ENCODE measurements at regions of chr1 and their contacts with region 1.

Region 1: DNA sequence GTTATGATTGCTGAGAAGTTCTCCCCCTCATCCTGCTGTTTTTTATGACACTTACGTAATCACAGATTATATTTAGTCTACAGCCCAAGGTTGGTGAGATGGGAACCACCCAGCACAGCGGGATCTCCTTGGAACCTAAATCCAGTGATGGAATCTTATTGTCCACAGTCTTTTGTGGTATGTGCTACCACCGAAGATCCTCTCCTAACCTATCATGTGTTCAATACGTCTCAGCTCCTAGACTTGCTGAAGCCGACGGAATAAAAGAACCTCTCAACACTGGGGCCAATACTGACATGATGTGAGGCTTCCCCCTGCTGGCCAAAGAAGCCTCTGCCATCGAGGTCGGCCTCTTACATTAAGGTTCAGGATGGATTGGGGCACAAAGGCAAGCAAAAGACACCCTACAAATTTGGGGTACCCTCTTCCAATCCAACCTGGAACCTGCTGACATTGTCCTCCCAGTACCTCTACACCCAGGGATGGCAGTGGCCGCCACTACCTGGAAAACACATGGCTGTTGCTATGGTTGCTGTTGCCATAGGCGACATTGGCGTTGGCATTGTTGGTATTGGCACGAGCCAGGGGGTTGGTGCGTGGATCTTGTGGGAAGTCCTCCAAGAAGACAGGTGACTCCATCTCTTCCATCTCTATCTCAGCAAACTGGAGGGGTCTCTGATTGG is 19.4 kb upstream of the KIF21B start:
- DNase-seq: peak; percentile 66 to 76 (median 74)
- ATAC-seq: peak; percentile 86
- H3K4me3 ChIP-seq: no peak overlapping the region
- H3K27ac ChIP-seq: no peak overlapping the region
- H3K4me1 ChIP-seq: no peaks in the 10 kb centered on the region
- H3K27me3 ChIP-seq: no peaks in the 10 kb centered on the region
- CTCF ChIP-seq: peak; percentile 66 to 90 (median 79)
- POLR2A ChIP-seq: no peak

Region 2: GRCh38 chr1:200971955-200972711 is 70.8 kb before region 1 on chr1:
- intact Hi-C with region 1: loop called (anchors 5 kb)
- DNase-seq: peak; percentile 67 to 76 (median 71)
- ATAC-seq: peak; percentile 44
- H3K4me3 ChIP-seq: no peak overlapping the region
- H3K27ac ChIP-seq: no peak overlapping the region
- H3K4me1 ChIP-seq: peaks cover 4% of the 10 kb centered on the region
- H3K27me3 ChIP-seq: no peaks in the 10 kb centered on the region
- CTCF ChIP-seq: peak; percentile 61 to 93 (median 78)
- POLR2A ChIP-seq: no peak

Region 3: GRCh38 chr1:201266774-201267173 is 223.9 kb after region 1 on chr1:
- intact Hi-C with region 1: no loop called
- DNase-seq: no peak
- ATAC-seq: no peak
- H3K4me3 ChIP-seq: no peak overlapping the region
- H3K27ac ChIP-seq: no peak overlapping the region
- H3K4me1 ChIP-seq: no peaks in the 10 kb centered on the region
- H3K27me3 ChIP-seq: no peaks in the 10 kb centered on the region
- CTCF ChIP-seq: no peak
- POLR2A ChIP-seq: no peak